Activated CD8-positive, alpha-beta T cell treated with anti-CD3 and anti-CD28 coated beads, Interleukin-2, amount 10 ng/mL, durations not matched to agents 7 days and 5 days (primary cell): ENCODE measurements at regions of chr2 and their contacts with region 1.

Region 1: GRCh38 chr2:176140513-176141317 is 10.6 kb upstream of the HOXD4 start:
- DNase-seq: peak; percentile 79
- ATAC-seq: peak; percentile 93
- H3K4me3 Mint-ChIP-seq: peak overlapping the region; percentile 6
- H3K27ac Mint-ChIP-seq: no peak overlapping the region
- H3K4me1 Mint-ChIP-seq: peaks cover 29% of the 10 kb centered on the region
- H3K27me3 Mint-ChIP-seq: peaks cover 69% of the 10 kb centered on the region

Region 2: DNA sequence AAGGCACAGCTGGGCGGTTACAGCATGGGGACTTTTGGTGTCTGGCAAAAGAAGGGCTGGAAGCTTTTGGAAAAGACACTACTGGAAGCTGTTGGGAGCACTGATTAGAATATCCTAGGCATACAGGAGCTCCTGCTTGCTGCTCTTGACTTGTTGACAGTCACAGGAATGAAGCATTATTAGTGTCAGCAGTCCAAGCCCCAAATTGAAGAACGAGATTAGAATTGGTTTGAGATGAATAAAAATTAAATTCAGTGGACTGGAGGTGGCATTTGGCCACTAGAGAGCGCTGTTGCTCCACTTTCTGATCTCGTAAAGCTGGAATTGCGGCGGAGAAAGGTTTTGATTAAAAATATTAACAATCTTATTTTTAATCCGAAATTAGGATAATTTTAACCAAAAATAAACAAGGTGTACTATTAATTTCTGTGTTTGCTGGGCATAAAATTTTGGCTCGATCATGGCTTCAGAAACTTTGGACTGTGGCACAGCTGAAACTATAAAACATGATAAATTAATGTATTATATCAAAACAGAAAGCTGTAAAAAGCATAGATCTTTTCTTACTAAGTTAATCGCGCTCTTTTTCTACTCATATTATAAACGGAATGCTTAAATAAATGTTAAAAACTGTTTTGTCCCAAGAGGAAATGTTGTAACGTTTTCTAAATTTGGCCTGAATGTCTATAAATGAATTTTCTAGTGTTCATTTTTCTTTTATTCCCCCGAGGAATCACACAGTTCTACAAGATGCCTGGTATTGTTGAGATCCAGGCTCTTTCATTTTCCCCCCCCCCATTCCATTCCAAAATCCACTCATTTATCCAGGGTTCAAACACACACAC is 13.6 kb before region 1 on chr2:
- CTCF ChIA-PET with region 1: interaction called, 22 read pairs
- POLR2A ChIA-PET with region 1: no interaction called
- DNase-seq: peak; percentile 75
- ATAC-seq: no peak
- H3K4me3 Mint-ChIP-seq: no peak overlapping the region
- H3K27ac Mint-ChIP-seq: no peak overlapping the region
- H3K4me1 Mint-ChIP-seq: peaks cover 16% of the 10 kb centered on the region
- H3K27me3 Mint-ChIP-seq: peaks cover 73% of the 10 kb centered on the region

Region 3: DNA sequence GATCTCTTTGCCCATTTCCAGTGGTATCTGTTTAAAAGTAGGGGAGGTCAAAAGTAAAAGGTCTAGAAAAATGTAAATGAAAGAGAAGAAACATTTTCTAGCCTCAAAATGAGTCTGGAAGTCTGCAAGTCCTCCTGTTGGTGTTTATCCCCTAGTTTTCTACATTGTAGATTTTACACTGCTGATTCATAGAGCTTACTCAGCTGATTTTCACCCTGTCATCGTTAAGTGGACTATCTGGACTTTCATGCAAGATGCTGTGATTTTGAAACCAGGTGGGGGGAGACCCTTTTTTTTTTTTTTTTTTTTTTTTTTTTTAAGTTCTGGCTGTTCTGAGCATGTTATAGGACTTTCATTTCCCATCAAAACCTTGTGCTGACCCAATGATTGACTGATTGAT is 26.7 kb after region 1 on chr2:
- CTCF ChIA-PET with region 1: interaction called, 12 read pairs
- POLR2A ChIA-PET with region 1: no interaction called
- DNase-seq: no peak
- ATAC-seq: no peak
- H3K4me3 Mint-ChIP-seq: no peak overlapping the region
- H3K27ac Mint-ChIP-seq: no peak overlapping the region
- H3K4me1 Mint-ChIP-seq: peaks cover 3% of the 10 kb centered on the region
- H3K27me3 Mint-ChIP-seq: peaks cover 74% of the 10 kb centered on the region

Region 4: DNA sequence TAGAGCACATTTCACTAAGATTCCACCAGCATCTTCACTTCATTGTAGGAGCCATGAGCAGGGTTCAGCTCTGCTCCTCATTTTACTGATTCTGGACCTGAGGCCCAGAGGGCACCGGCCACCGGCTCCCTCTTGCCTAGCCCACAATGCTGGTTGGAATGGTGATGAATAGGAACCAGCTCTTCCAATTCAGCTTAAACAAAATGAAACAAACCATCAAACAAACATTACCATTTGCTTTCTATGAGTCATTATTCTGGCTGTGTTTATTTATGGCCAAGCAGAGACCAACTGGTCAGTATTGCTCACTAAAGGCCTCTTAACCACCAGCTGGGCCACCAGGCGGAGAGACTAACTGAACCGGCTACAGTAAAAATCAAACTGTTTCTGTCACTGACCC is 305.2 kb after region 1 on chr2:
- CTCF ChIA-PET with region 1: interaction called, 89 read pairs
- POLR2A ChIA-PET with region 1: no interaction called
- DNase-seq: no peak
- ATAC-seq: no peak
- H3K4me3 Mint-ChIP-seq: no peak overlapping the region
- H3K27ac Mint-ChIP-seq: no peak overlapping the region
- H3K4me1 Mint-ChIP-seq: no peaks in the 10 kb centered on the region
- H3K27me3 Mint-ChIP-seq: peaks cover 2% of the 10 kb centered on the region

Region 5: GRCh38 chr2:176638167-176639015 is 497.7 kb after region 1 on chr2:
- CTCF ChIA-PET with region 1: interaction called, 18 read pairs
- POLR2A ChIA-PET with region 1: no interaction called
- DNase-seq: peak; percentile 70
- ATAC-seq: peak; percentile 94
- H3K4me3 Mint-ChIP-seq: peak overlapping the region; percentile 61
- H3K27ac Mint-ChIP-seq: no peak overlapping the region
- H3K4me1 Mint-ChIP-seq: peaks cover 7% of the 10 kb centered on the region
- H3K27me3 Mint-ChIP-seq: peaks cover 60% of the 10 kb centered on the region